Dorsolateral prefrontal cortex (tissue), 120 donors: ENCODE measurements at regions of chr4 and their contacts with region 1.

Region 1: GRCh38 chr4:39913471-39913870 is 64.2 kb downstream of the PDS5A start:
- DNase-seq: no peak
- H3K4me3 ChIP-seq: no peak overlapping the region
- H3K27ac ChIP-seq: no peak overlapping the region
- H3K27me3 ChIP-seq: no peaks in the 10 kb centered on the region
- CTCF ChIP-seq: no peak

Region 2: DNA sequence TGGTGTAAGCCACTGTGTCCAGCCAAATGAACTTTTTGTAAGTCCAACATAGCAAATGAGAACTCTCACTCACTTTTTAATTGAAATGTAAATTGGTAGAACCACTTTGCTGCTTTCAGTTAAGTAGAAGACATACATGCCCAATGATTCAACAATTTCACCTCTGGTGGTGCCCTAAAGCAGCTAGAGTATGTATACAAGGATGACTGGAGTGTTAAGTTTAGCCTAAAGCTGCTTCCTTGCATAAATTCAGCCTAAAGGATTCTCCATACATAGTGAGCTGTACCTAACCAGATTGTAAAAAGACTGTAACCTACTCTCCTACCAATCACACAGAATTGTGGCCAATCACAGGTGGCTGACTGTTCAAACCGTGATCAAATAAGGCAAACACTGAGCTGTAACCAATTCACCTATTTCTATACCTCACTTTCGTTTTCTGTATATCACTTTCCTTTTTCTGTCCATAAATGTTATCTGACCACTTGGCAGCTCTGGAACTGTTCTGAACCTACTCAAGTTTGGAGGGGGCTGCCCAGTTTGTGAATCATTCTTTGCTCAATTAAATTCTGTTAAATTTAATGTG is 24.3 kb after region 1 on chr4:
- intact Hi-C with region 1: no loop called
- DNase-seq: no peak
- H3K4me3 ChIP-seq: no peak overlapping the region
- H3K27ac ChIP-seq: no peak overlapping the region
- H3K27me3 ChIP-seq: no peaks in the 10 kb centered on the region
- CTCF ChIP-seq: no peak

Region 3: GRCh38 chr4:39961311-39961877 is 47.9 kb after region 1 on chr4:
- intact Hi-C with region 1: loop called in 1 of 2 experiments (anchors 10 kb)
- DNase-seq: no peak
- H3K4me3 ChIP-seq: no peak overlapping the region
- H3K27ac ChIP-seq: no peak overlapping the region
- H3K27me3 ChIP-seq: no peaks in the 10 kb centered on the region
- CTCF ChIP-seq: no peak

Region 4: GRCh38 chr4:40099010-40099409 is 185.5 kb after region 1 on chr4:
- intact Hi-C with region 1: no loop called
- DNase-seq: no peak
- H3K4me3 ChIP-seq: no peak overlapping the region
- H3K27ac ChIP-seq: no peak overlapping the region
- H3K27me3 ChIP-seq: no peaks in the 10 kb centered on the region
- CTCF ChIP-seq: no peak